ENCODE measurements at regions of chr3 and their contacts with region 1.

Region 1: GRCh38 chr3:136311975-136312374 is 61.8 kb downstream of the PCCB start:
- DNase-seq: no peak
- ATAC-seq: no peak
- H3K4me3 ChIP-seq: no peak overlapping the region
- H3K4me3 Mint-ChIP-seq: no peak overlapping the region
- H3K27ac ChIP-seq: no peak overlapping the region
- H3K27ac Mint-ChIP-seq: no peak overlapping the region
- H3K4me1 ChIP-seq: no peaks in the 10 kb centered on the region
- H3K4me1 Mint-ChIP-seq: no peaks in the 10 kb centered on the region
- H3K27me3 ChIP-seq: no peaks in the 10 kb centered on the region
- H3K27me3 Mint-ChIP-seq: no peaks in the 10 kb centered on the region
- CTCF ChIP-seq: no peak

Region 2: GRCh38 chr3:136270179-136270578 is 41.8 kb before region 1 on chr3:
- CTCF ChIA-PET with region 1: no interaction called
- POLR2A ChIA-PET with region 1: no interaction called
- intact Hi-C with region 1: loop called in 1 of 2 experiments (anchors 1 kb)
- DNase-seq: no peak
- ATAC-seq: no peak
- H3K4me3 ChIP-seq: no peak overlapping the region
- H3K4me3 Mint-ChIP-seq: no peak overlapping the region
- H3K27ac ChIP-seq: no peak overlapping the region
- H3K27ac Mint-ChIP-seq: no peak overlapping the region
- H3K4me1 ChIP-seq: no peaks in the 10 kb centered on the region
- H3K4me1 Mint-ChIP-seq: peaks cover 30% of the 10 kb centered on the region
- H3K27me3 ChIP-seq: no peaks in the 10 kb centered on the region
- H3K27me3 Mint-ChIP-seq: no peaks in the 10 kb centered on the region
- CTCF ChIP-seq: no peak

Region 3: DNA sequence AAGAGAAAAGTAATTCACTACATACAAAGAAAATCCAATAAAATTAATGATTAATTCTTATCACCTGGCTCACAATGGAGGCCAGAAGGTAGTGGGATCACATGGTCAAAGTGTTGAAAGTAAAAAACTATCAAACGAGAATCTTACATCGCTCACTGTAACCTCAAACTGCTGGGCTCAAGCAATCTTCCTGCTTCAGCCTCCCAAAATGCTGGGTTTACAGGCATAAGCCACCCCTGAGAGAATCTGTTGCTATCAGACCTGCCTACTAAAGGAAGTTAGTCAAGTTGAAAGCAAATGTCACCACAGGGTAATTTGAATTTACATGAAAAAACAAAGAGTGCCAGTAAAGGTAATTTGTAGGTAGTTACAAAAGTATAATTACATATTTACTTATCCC is 41.5 kb after region 1 on chr3:
- CTCF ChIA-PET with region 1: no interaction called
- POLR2A ChIA-PET with region 1: no interaction called
- intact Hi-C with region 1: no loop called
- DNase-seq: no peak
- ATAC-seq: no peak
- H3K4me3 ChIP-seq: no peak overlapping the region
- H3K4me3 Mint-ChIP-seq: no peak overlapping the region
- H3K27ac ChIP-seq: no peak overlapping the region
- H3K27ac Mint-ChIP-seq: no peak overlapping the region
- H3K4me1 ChIP-seq: no peaks in the 10 kb centered on the region
- H3K4me1 Mint-ChIP-seq: peaks cover 5% of the 10 kb centered on the region
- H3K27me3 ChIP-seq: no peaks in the 10 kb centered on the region
- H3K27me3 Mint-ChIP-seq: no peaks in the 10 kb centered on the region
- CTCF ChIP-seq: no peak